ENCODE measurements at regions of chr2 and their contacts with region 1.

Region 1: GRCh38 chr2:113370478-113371091 is 66.9 kb upstream of the ZNG1B start:
- DNase-seq: peak; percentile 29 to 83 (median 65)
- ATAC-seq: peak; percentile 94
- H3K4me3 ChIP-seq: no peak overlapping the region
- H3K4me3 Mint-ChIP-seq: no peak overlapping the region
- H3K27ac ChIP-seq: no peak overlapping the region
- H3K27ac Mint-ChIP-seq: no peak overlapping the region
- H3K4me1 ChIP-seq: peaks cover 4% of the 10 kb centered on the region
- H3K4me1 Mint-ChIP-seq: peaks cover 5% of the 10 kb centered on the region
- H3K27me3 ChIP-seq: no peaks in the 10 kb centered on the region
- H3K27me3 Mint-ChIP-seq: peaks cover 3% of the 10 kb centered on the region
- CTCF ChIP-seq: peak; percentile 61

Region 2: GRCh38 chr2:113198790-113199612 is 171.6 kb before region 1 on chr2:
- CTCF ChIA-PET with region 1: interaction called, 52 read pairs
- POLR2A ChIA-PET with region 1: no interaction called
- intact Hi-C with region 1: loop called (anchors 1 kb)
- DNase-seq: peak; percentile 48 to 84 (median 73)
- ATAC-seq: peak; percentile 77
- H3K4me3 ChIP-seq: no peak overlapping the region
- H3K4me3 Mint-ChIP-seq: no peak overlapping the region
- H3K27ac ChIP-seq: no peak overlapping the region
- H3K27ac Mint-ChIP-seq: no peak overlapping the region
- H3K4me1 ChIP-seq: peaks cover 7% of the 10 kb centered on the region
- H3K4me1 Mint-ChIP-seq: peaks cover 24% of the 10 kb centered on the region
- H3K27me3 ChIP-seq: no peaks in the 10 kb centered on the region
- H3K27me3 Mint-ChIP-seq: no peaks in the 10 kb centered on the region
- CTCF ChIP-seq: peak; percentile 76

Region 3: GRCh38 chr2:113233593-113234550 is 136.7 kb before region 1 on chr2:
- CTCF ChIA-PET with region 1: interaction called, 15 read pairs
- POLR2A ChIA-PET with region 1: no interaction called
- intact Hi-C with region 1: no loop called
- DNase-seq: no peak
- ATAC-seq: no peak
- H3K4me3 ChIP-seq: no peak overlapping the region
- H3K4me3 Mint-ChIP-seq: no peak overlapping the region
- H3K27ac ChIP-seq: no peak overlapping the region
- H3K27ac Mint-ChIP-seq: no peak overlapping the region
- H3K4me1 ChIP-seq: no peaks in the 10 kb centered on the region
- H3K4me1 Mint-ChIP-seq: peaks cover 4% of the 10 kb centered on the region
- H3K27me3 ChIP-seq: no peaks in the 10 kb centered on the region
- H3K27me3 Mint-ChIP-seq: no peaks in the 10 kb centered on the region
- CTCF ChIP-seq: no peak

Region 4: GRCh38 chr2:113240150-113240862 is 130.3 kb before region 1 on chr2:
- CTCF ChIA-PET with region 1: interaction called, 146 read pairs
- POLR2A ChIA-PET with region 1: no interaction called
- intact Hi-C with region 1: no loop called
- DNase-seq: no peak
- ATAC-seq: no peak
- H3K4me3 ChIP-seq: no peak overlapping the region
- H3K4me3 Mint-ChIP-seq: no peak overlapping the region
- H3K27ac ChIP-seq: no peak overlapping the region
- H3K27ac Mint-ChIP-seq: no peak overlapping the region
- H3K4me1 ChIP-seq: no peaks in the 10 kb centered on the region
- H3K4me1 Mint-ChIP-seq: peaks cover 12% of the 10 kb centered on the region
- H3K27me3 ChIP-seq: no peaks in the 10 kb centered on the region
- H3K27me3 Mint-ChIP-seq: no peaks in the 10 kb centered on the region
- CTCF ChIP-seq: no peak

Region 5: GRCh38 chr2:113248997-113249770 is 121.4 kb before region 1 on chr2:
- CTCF ChIA-PET with region 1: interaction called, 146 read pairs
- POLR2A ChIA-PET with region 1: interaction called, 4 read pairs
- intact Hi-C with region 1: loop called (anchors 1 kb)
- DNase-seq: peak; percentile 51 to 88 (median 74)
- ATAC-seq: peak; percentile 62
- H3K4me3 ChIP-seq: no peak overlapping the region
- H3K4me3 Mint-ChIP-seq: no peak overlapping the region
- H3K27ac ChIP-seq: peak overlapping the region in 1 of 2 experiments; percentile 25
- H3K27ac Mint-ChIP-seq: peak overlapping the region; percentile 12
- H3K4me1 ChIP-seq: peaks cover 47% of the 10 kb centered on the region
- H3K4me1 Mint-ChIP-seq: peaks cover 50% of the 10 kb centered on the region
- H3K27me3 ChIP-seq: no peaks in the 10 kb centered on the region
- H3K27me3 Mint-ChIP-seq: no peaks in the 10 kb centered on the region
- CTCF ChIP-seq: peak; percentile 94

Region 6: GRCh38 chr2:113266431-113266830 is 104.2 kb before region 1 on chr2:
- CTCF ChIA-PET with region 1: interaction called, 12 read pairs
- POLR2A ChIA-PET with region 1: no interaction called
- intact Hi-C with region 1: no loop called
- DNase-seq: no peak
- ATAC-seq: no peak
- H3K4me3 ChIP-seq: no peak overlapping the region
- H3K4me3 Mint-ChIP-seq: no peak overlapping the region
- H3K27ac ChIP-seq: no peak overlapping the region
- H3K27ac Mint-ChIP-seq: no peak overlapping the region
- H3K4me1 ChIP-seq: peaks cover under 1% of the 10 kb centered on the region
- H3K4me1 Mint-ChIP-seq: no peaks in the 10 kb centered on the region
- H3K27me3 ChIP-seq: no peaks in the 10 kb centered on the region
- H3K27me3 Mint-ChIP-seq: peaks cover 4% of the 10 kb centered on the region
- CTCF ChIP-seq: no peak